Activated CD4-positive, alpha-beta memory T cell treated with anti-CD3 and anti-CD28 coated beads, Interleukin-2, amount 10 ng/mL, durations not matched to agents 7 days and 5 days (primary cell): ENCODE measurements at regions of chr19 and their contacts with region 1.

Region 1: GRCh38 chr19:38059897-38060296 is 152.9 kb downstream of the SIPA1L3 start:
- DNase-seq: peak; percentile 29
- H3K4me3 Mint-ChIP-seq: no peak overlapping the region
- H3K27ac Mint-ChIP-seq: no peak overlapping the region
- H3K4me1 Mint-ChIP-seq: peaks cover 8% of the 10 kb centered on the region
- H3K27me3 Mint-ChIP-seq: no peaks in the 10 kb centered on the region

Region 2: DNA sequence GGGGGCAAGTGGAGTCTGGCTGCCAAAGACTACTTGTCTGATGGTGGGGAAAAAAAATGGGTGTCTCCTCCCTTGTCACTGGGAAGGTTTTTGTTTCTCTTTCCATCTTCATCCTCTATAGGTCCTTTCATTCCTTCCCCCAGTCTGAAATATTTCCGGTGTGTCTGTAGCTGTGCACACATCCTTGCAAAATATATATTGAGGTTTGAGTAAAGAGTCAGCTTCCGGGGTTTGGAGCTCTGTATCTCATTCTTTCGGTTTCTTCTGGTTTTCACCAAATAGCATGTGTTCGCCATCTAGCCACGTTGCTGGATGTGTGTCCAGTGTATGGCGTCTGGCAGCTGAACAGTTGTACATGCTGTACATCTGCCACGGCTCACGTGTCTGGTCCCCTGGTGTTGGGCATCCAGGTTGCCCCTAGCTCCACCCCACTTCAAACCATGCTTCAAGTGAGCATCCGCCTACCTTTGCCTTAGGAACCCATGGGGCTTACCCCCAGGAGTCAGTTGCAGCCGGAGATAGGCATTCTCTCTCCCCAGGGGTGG is 10.7 kb before region 1 on chr19:
- CTCF ChIA-PET with region 1: interaction called, 4 read pairs
- POLR2A ChIA-PET with region 1: interaction called, 10 read pairs
- DNase-seq: peak; percentile 64
- H3K4me3 Mint-ChIP-seq: peak overlapping the region; percentile 66
- H3K27ac Mint-ChIP-seq: peak overlapping the region; percentile 95
- H3K4me1 Mint-ChIP-seq: peaks cover 35% of the 10 kb centered on the region
- H3K27me3 Mint-ChIP-seq: no peaks in the 10 kb centered on the region